CD4-positive, alpha-beta T cell (primary cell): ENCODE measurements at regions of chr4 and their contacts with region 1.

Region 1: DNA sequence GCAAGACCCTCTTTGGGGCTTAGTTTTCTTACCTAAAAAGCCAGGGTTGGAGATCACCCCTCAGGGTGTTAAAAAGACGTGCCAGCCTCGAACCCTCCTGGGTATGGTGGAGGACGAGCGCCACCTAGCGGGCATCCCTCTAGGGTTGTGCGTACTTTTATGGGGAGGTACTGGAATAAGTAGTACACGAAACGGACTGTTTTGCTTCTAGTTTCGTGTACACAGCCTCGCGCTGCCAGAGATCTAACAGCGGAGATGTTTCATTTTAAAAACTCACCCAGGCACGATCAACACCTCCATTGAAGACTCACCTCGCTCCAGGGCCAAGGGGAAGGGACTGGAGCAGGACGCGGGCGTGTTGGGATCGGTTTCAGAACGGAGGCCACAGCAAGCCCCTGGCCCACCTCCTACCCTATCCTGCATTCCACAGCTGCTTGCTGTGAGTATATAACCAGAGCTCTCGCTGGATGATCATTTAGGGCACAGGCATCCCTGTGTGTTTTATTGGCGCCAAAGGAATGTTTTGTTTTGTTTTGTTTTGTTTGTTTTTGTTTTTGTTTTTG is 4.8 kb upstream of the NKX3-2 start:
- DNase-seq: peak; percentile 59 to 87 (median 76)
- ATAC-seq: peak; percentile 60
- H3K4me3 ChIP-seq: peak overlapping the region; percentile 13
- H3K4me3 Mint-ChIP-seq: peak overlapping the region; percentile 65
- H3K27ac ChIP-seq: no peak overlapping the region
- H3K27ac Mint-ChIP-seq: no peak overlapping the region
- H3K4me1 ChIP-seq: peaks cover 36% of the 10 kb centered on the region
- H3K4me1 Mint-ChIP-seq: peaks cover 29% of the 10 kb centered on the region
- H3K27me3 ChIP-seq: peaks cover 45 to 73% of the 10 kb centered on the region in 2 experiments
- H3K27me3 Mint-ChIP-seq: peaks cover 85% of the 10 kb centered on the region
- CTCF ChIP-seq: peak; percentile 93

Region 2: DNA sequence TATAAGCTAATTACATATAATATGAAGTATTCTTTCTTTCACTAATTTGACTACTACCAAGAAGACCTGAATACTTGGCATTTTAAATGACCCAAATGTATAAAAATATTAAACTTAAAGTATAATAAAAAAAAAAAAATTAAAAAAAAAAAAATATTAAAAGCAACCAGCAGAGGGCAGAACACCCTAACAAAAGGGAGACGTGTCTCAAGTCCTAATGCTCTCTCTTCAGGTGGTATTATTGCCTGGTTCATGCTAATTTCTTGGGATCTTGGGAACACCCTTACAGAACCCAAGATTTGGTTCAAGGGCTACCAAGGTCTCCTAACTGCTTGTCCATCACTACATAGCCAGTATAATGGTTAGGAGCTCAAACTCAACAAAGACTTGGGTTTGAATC is 819.7 kb before region 1 on chr4:
- CTCF ChIA-PET with region 1: no interaction called
- POLR2A ChIA-PET with region 1: interaction called, 3 read pairs
- intact Hi-C with region 1: loop called (anchors 1 kb)
- DNase-seq: peak in 3 of 14 experiments; percentile 11 to 36 (median 23)
- ATAC-seq: no peak
- H3K4me3 ChIP-seq: no peak overlapping the region
- H3K4me3 Mint-ChIP-seq: no peak overlapping the region
- H3K27ac ChIP-seq: no peak overlapping the region
- H3K27ac Mint-ChIP-seq: no peak overlapping the region
- H3K4me1 ChIP-seq: no peaks in the 10 kb centered on the region
- H3K4me1 Mint-ChIP-seq: no peaks in the 10 kb centered on the region
- H3K27me3 ChIP-seq: peaks cover 0 to 6% of the 10 kb centered on the region in 2 experiments
- H3K27me3 Mint-ChIP-seq: peaks cover 48% of the 10 kb centered on the region
- CTCF ChIP-seq: peak; percentile 53

Region 3: DNA sequence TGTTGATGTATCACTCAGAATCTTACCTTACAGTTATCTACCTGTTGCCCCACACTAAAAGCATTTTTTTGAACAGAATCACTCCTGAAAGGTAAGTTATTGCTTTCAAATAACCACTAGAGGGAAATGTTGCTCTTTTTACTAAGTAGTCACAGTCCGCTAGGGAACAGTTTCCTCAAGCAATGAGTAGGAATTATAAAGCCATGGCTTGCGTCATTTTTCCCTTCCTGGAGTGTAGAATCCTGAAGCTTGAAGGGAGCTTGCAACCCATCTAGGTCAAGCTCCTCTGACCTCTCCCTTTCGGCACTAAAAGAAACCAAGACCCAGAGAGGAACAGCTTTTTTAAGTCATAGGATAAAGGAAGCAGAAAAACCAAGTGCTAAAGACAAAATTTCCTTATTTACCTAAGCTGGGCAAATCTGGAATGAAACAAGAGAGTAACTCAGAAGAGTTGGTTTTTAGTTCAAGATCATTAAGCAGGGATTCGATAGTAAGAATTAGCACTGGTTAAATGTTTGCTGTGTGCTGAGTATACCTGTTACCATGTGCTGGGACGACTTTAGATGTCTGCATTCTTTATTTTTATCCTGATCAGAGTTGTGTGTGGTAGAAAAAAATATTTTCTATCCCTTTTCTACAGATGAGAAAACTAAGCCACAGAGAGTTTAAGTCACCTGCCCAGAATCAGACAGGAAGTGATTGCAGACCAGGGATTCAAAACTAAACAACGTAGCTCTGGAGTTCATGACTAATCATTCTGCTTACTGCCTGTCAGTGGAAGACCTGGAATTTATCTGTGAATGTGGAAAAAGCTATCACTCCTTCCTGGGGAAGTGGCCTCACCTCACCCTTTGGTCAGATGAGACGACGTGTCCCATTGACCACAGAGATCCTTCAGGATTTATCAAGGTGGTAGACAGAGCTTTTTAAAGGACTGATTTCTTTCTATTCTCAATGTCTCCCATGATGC is 696.4 kb before region 1 on chr4:
- CTCF ChIA-PET with region 1: no interaction called
- POLR2A ChIA-PET with region 1: no interaction called
- intact Hi-C with region 1: loop called (anchors 2 to 5 kb)
- DNase-seq: no peak
- ATAC-seq: no peak
- H3K4me3 ChIP-seq: no peak overlapping the region
- H3K4me3 Mint-ChIP-seq: no peak overlapping the region
- H3K27ac ChIP-seq: no peak overlapping the region
- H3K27ac Mint-ChIP-seq: no peak overlapping the region
- H3K4me1 ChIP-seq: no peaks in the 10 kb centered on the region
- H3K4me1 Mint-ChIP-seq: no peaks in the 10 kb centered on the region
- H3K27me3 ChIP-seq: no peaks in the 10 kb centered on the region
- H3K27me3 Mint-ChIP-seq: peaks cover 31% of the 10 kb centered on the region
- CTCF ChIP-seq: no peak

Region 4: DNA sequence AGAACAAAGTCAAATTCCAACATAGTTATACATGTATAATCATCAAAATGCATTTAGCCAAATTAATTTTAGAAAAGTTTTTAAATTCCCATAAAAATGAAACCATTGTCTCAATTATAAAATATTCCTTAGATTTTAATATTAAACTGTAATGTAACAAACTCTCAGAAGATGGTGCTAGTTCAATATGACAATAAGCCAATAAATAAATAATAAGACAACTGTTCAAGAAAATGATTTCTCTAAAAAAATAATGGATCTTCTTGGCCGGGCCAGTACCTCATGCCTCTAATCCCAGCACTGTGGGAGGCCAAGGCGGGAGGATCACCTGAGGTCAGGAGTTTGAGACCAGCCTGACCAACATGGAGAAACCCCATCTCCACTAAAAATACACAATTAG is 145.2 kb before region 1 on chr4:
- CTCF ChIA-PET with region 1: no interaction called
- POLR2A ChIA-PET with region 1: no interaction called
- intact Hi-C with region 1: no loop called
- DNase-seq: no peak
- ATAC-seq: no peak
- H3K4me3 ChIP-seq: no peak overlapping the region
- H3K4me3 Mint-ChIP-seq: no peak overlapping the region
- H3K27ac ChIP-seq: no peak overlapping the region
- H3K27ac Mint-ChIP-seq: no peak overlapping the region
- H3K4me1 ChIP-seq: no peaks in the 10 kb centered on the region
- H3K4me1 Mint-ChIP-seq: no peaks in the 10 kb centered on the region
- H3K27me3 ChIP-seq: no peaks in the 10 kb centered on the region
- H3K27me3 Mint-ChIP-seq: no peaks in the 10 kb centered on the region
- CTCF ChIP-seq: no peak

Region 5: DNA sequence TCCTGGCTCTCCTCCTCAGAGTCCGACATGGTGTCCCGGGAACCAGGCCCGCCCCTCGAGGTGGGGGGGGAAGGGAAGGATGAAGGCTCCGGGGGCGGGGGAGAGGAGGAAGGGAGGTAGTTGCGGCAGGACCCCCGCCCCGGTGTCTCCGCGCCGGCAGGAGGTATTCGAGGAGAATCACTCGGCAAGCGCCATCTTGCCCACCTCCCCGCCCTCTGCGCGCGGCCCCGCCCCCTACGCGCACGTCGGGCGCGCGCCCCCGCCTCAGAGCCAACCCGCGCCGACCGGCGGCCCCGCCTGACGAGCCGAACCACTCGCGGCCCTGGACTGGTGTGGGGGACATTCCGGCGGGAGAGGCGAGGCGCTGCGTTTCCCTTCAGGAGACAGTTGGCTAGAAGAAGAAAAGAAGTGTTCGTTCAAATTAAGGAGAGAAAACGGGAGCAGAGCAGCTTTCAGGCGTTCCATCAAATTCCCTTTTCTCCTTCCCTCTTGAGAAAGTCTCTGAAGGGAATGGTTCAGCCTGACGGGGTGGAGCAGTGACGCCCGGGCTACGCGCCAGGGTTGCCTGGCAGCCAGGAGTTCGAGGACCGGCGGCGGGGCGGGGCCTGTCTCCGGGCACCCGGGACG is 64.8 kb before region 1 on chr4 and contains the start of gene RAB28:
- CTCF ChIA-PET with region 1: no interaction called
- POLR2A ChIA-PET with region 1: no interaction called
- intact Hi-C with region 1: loop called in 1 of 2 experiments (anchors 10 kb)
- DNase-seq: peak; percentile 87 to 97 (median 92)
- ATAC-seq: peak; percentile 86
- H3K4me3 ChIP-seq: peak within 1 kb of the TSS; percentile 75
- H3K4me3 Mint-ChIP-seq: peak within 1 kb of the TSS; percentile 91
- H3K27ac ChIP-seq: peak within 1 kb of the TSS; percentile 89 to 98
- H3K27ac Mint-ChIP-seq: peak within 1 kb of the TSS; percentile 94
- H3K4me1 ChIP-seq: peaks cover 22% of the 10 kb centered on the region
- H3K4me1 Mint-ChIP-seq: peaks cover 23% of the 10 kb centered on the region
- H3K27me3 ChIP-seq: peaks cover 0 to 10% of the 10 kb centered on the region in 2 experiments
- H3K27me3 Mint-ChIP-seq: peaks cover 14% of the 10 kb centered on the region
- CTCF ChIP-seq: no peak
- total RNA-seq, gene RAB28: 3.9 to 4.2 TPM

Region 6: GRCh38 chr4:13537011-13537831 is 11.8 kb before region 1 on chr4:
- CTCF ChIA-PET with region 1: no interaction called
- POLR2A ChIA-PET with region 1: no interaction called
- intact Hi-C with region 1: no loop called
- DNase-seq: peak in 1 of 14 experiments; percentile 44
- ATAC-seq: no peak
- H3K4me3 ChIP-seq: no peak overlapping the region
- H3K4me3 Mint-ChIP-seq: no peak overlapping the region
- H3K27ac ChIP-seq: no peak overlapping the region
- H3K27ac Mint-ChIP-seq: no peak overlapping the region
- H3K4me1 ChIP-seq: peaks cover 58% of the 10 kb centered on the region
- H3K4me1 Mint-ChIP-seq: peaks cover 47% of the 10 kb centered on the region
- H3K27me3 ChIP-seq: peaks cover 97% of the 10 kb centered on the region in 2 experiments
- H3K27me3 Mint-ChIP-seq: peaks cover 95% of the 10 kb centered on the region
- CTCF ChIP-seq: no peak